Ovary (tissue), 10 donors: ENCODE measurements at regions of chr6 and their contacts with region 1.

Region 1: DNA sequence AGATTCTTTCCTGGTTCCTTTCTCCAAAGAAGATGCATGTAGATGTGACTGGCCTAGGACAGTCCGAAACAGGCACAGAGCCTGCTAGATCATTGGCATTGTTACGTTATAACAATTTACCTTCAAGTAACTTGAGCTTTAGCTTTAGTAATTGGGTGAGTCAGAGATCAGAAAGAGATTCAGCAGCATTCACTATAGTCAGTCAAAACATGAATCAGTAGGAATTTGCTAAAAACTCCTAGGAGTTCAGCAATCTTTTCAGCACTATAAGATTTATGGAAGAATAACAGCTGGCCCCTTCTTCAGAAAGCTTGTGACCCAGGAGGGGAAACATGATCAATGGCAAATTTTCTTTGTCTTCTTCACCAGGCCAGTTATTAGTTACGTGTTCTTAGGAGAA is 281.7 kb upstream of the PRDM1 start:
- DNase-seq: no peak
- H3K4me3 ChIP-seq: no peak overlapping the region
- H3K27ac ChIP-seq: no peak overlapping the region
- H3K4me1 ChIP-seq: peaks cover 3% of the 10 kb centered on the region
- H3K27me3 ChIP-seq: no peaks in the 10 kb centered on the region
- CTCF ChIP-seq: no peak
- EP300 ChIP-seq: no peak
- POLR2A ChIP-seq: no peak

Region 2: GRCh38 chr6:105259913-105260889 is 544.2 kb before region 1 on chr6:
- intact Hi-C with region 1: no loop called
- DNase-seq: no peak
- H3K4me3 ChIP-seq: no peak overlapping the region
- H3K27ac ChIP-seq: no peak overlapping the region
- H3K4me1 ChIP-seq: no peaks in the 10 kb centered on the region
- H3K27me3 ChIP-seq: no peaks in the 10 kb centered on the region
- CTCF ChIP-seq: no peak
- EP300 ChIP-seq: no peak
- POLR2A ChIP-seq: no peak

Region 3: DNA sequence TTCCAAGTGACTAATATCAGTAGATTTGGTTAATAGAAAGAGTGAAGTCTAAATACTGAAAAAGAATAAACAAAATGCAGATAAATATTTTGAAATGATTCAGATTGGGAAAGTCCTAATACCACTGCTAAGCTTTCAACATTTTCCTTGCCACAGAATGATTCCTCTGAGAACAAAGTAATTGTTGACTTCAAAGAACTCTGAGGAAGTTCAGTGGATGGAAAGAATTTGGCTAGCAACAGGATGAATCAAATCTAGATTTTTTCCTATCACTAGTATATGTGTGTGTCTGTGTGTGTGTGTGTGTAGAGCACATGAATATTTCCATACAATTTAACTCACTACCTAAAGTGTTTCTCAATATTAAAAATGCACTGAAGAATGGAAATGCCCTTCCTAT is 293.7 kb before region 1 on chr6:
- intact Hi-C with region 1: no loop called
- DNase-seq: no peak
- H3K4me3 ChIP-seq: no peak overlapping the region
- H3K27ac ChIP-seq: no peak overlapping the region
- H3K4me1 ChIP-seq: no peaks in the 10 kb centered on the region
- H3K27me3 ChIP-seq: no peaks in the 10 kb centered on the region
- CTCF ChIP-seq: no peak
- EP300 ChIP-seq: no peak
- POLR2A ChIP-seq: no peak

Region 4: GRCh38 chr6:105573138-105573537 is 231.3 kb before region 1 on chr6:
- intact Hi-C with region 1: no loop called
- DNase-seq: no peak
- H3K4me3 ChIP-seq: no peak overlapping the region
- H3K27ac ChIP-seq: no peak overlapping the region
- H3K4me1 ChIP-seq: no peaks in the 10 kb centered on the region
- H3K27me3 ChIP-seq: no peaks in the 10 kb centered on the region
- CTCF ChIP-seq: no peak
- EP300 ChIP-seq: no peak
- POLR2A ChIP-seq: no peak

Region 5: DNA sequence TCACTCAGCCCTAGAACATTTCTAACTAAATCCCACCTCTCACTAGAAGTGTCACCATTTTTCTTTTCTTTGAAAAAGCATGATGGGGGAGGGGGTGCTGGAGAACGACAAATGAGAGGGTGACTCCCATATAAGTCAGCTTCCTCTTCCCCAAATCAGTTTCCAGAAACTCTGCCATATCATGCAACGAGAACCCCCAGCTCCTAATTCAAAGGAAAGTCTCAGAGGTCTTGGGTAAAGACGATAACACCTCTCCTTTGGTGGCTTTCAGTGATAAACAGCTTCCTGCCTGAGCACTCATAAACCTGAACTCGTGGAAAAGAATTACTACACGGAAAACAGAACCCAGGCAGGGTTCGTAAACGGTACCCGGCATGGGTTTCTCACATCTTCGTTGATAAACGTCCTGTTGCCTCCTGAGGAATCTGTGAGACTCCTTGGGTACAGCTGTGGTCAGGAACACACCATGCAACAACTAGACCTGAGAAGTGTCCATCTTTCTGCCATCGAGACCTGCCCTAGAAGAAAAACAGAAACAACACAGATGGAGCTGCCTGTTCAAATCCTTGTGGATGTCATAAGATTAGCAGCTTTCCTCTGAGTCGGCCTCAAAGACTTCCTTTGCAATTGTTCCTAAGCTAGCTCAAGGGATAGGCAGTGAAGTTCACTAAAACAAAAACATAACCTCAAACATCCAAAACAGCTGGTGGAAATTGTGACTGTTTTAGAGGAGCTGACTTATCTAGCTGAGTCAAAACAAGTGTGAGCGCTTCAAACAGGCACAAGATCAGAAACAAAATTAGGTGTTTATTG is 95.9 kb after region 1 on chr6:
- intact Hi-C with region 1: loop called in 1 of 4 experiments (anchors 10 kb)
- DNase-seq: no peak
- H3K4me3 ChIP-seq: no peak overlapping the region
- H3K27ac ChIP-seq: peak overlapping the region in 1 of 2 donors; percentile 57
- H3K4me1 ChIP-seq: peaks cover 14% of the 10 kb centered on the region
- H3K27me3 ChIP-seq: no peaks in the 10 kb centered on the region
- CTCF ChIP-seq: no peak
- EP300 ChIP-seq: no peak
- POLR2A ChIP-seq: no peak